ENCODE measurements at regions of chr9 and their contacts with region 1.

Region 1: DNA sequence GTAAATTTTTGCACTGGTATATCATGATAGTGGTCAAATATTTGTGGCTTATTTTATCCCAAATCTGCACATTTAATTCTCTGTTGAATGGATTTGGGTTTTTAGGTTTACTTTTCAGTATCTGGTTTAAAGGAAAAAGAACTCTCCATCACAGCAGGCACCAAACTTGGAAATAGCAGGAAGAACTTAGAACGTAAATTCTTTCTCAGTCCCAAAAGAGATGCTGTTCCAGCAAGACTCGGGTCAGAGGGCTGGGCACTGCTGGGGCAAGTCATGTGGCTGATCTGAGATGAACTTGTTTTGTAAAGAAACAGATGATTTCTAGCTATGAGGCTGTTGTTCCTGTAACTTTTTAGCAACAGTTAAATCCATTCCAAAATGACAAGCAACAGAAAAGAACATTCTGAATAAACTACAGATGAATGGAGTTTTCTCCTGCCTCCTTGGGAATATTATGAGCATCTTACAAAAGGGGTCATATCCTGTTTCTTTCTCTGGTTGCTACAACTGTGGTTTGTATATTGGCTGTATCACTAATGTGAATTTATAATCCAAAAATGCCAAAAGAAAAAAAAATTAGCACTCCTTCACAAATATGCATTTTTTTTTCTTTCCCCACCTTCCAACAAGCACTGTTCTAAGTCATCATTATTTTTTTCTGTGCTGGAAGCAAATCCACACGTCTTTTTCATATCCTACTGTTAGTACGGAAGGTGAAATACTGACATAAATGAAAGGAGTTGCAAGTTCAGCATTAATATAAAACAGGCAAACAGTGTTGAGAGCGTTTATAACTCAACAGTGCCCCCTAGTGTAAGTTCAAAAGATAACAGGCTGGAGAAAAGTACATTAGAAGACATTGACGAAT is 31.1 kb downstream of the OR2K2 start:
- DNase-seq: peak; percentile 8 to 62
- H3K4me3 ChIP-seq: no peak overlapping the region
- H3K27ac ChIP-seq: no peak overlapping the region
- H3K4me1 ChIP-seq: peaks cover 8% of the 10 kb centered on the region
- H3K27me3 ChIP-seq: no peaks in the 10 kb centered on the region
- CTCF ChIP-seq: peak; percentile 93

Region 2: GRCh38 chr9:110183208-110184145 is 1115.5 kb before region 1 on chr9:
- CTCF ChIA-PET with region 1: no interaction called
- POLR2A ChIA-PET with region 1: no interaction called
- intact Hi-C with region 1: loop called (anchors 5 kb)
- DNase-seq: peak; percentile 60 to 65
- H3K4me3 ChIP-seq: no peak overlapping the region
- H3K27ac ChIP-seq: no peak overlapping the region
- H3K4me1 ChIP-seq: peaks cover 26% of the 10 kb centered on the region
- H3K27me3 ChIP-seq: no peaks in the 10 kb centered on the region
- CTCF ChIP-seq: peak; percentile 87

Region 3: GRCh38 chr9:110638381-110638954 is 660.5 kb before region 1 on chr9:
- CTCF ChIA-PET with region 1: no interaction called
- POLR2A ChIA-PET with region 1: no interaction called
- intact Hi-C with region 1: loop called (anchors 1 kb)
- DNase-seq: peak in 1 of 2 experiments; percentile 52
- H3K4me3 ChIP-seq: no peak overlapping the region
- H3K27ac ChIP-seq: no peak overlapping the region
- H3K4me1 ChIP-seq: peaks cover 7% of the 10 kb centered on the region; the same call in 1 of the 2 replicates
- H3K27me3 ChIP-seq: no peaks in the 10 kb centered on the region
- CTCF ChIP-seq: peak; percentile 72

Region 4: DNA sequence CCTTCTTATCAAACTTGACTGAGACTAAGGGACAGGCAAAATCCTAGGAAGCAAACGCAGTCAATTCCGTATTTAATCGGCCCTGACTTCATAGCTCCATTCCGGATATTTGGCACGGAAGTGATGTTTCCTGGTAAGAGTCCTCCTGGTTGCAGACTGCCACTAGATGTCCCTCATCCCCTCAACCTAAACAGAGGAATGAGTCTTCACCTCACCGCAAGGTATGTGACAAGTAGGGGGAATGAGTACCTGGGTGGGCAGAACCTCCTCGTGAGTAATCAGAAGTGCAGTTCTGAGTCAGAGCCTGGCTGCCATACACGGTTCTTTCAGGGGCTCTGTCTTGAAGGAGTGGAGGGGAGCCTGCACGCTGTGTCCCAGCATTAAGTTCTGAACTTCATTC is 456.8 kb before region 1 on chr9:
- CTCF ChIA-PET with region 1: no interaction called
- POLR2A ChIA-PET with region 1: no interaction called
- intact Hi-C with region 1: loop called (anchors 1 kb)
- DNase-seq: peak in 1 of 2 experiments; percentile 18
- H3K4me3 ChIP-seq: no peak overlapping the region
- H3K27ac ChIP-seq: no peak overlapping the region
- H3K4me1 ChIP-seq: no peaks in the 10 kb centered on the region
- H3K27me3 ChIP-seq: no peaks in the 10 kb centered on the region
- CTCF ChIP-seq: no peak

Region 5: GRCh38 chr9:111037381-111038305 is 261.3 kb before region 1 on chr9:
- CTCF ChIA-PET with region 1: no interaction called
- POLR2A ChIA-PET with region 1: no interaction called
- intact Hi-C with region 1: loop called (anchors 2 kb)
- DNase-seq: peak in 1 of 2 experiments; percentile 57
- H3K4me3 ChIP-seq: peak overlapping the region; percentile 74
- H3K27ac ChIP-seq: peak overlapping the region; percentile 3; the same call in 1 of the 2 replicates
- H3K4me1 ChIP-seq: peaks cover 16% of the 10 kb centered on the region
- H3K27me3 ChIP-seq: no peaks in the 10 kb centered on the region
- CTCF ChIP-seq: no peak; the same call in 1 of the 2 replicates

Region 6: DNA sequence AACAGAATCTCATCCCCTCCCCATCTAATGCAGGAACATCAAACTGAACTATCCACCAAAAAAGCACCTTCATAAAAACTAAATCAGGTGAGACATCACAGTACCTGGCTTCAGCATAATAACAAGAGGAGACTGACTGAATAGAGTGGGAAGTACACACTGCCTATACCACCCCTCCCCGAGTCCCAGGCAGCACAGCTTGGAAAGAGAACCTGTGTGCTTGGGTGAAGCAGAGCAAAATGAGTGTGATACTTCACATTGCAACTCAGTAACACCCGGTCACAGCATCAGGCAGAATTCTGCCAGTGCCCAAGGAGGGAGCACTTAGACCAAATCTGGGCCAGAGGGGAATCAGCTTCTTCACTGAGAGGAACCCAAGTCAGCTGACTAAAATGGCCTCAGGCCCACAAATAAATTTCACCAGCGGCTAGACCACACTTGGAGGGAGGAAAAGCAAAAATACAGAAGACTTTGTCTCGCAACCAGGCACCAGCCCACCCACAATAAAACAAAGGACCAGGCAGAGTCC is 100.3 kb after region 1 on chr9:
- CTCF ChIA-PET with region 1: no interaction called
- POLR2A ChIA-PET with region 1: no interaction called
- intact Hi-C with region 1: no loop called
- DNase-seq: no peak
- H3K4me3 ChIP-seq: no peak overlapping the region
- H3K27ac ChIP-seq: no peak overlapping the region
- H3K4me1 ChIP-seq: no peaks in the 10 kb centered on the region
- H3K27me3 ChIP-seq: no peaks in the 10 kb centered on the region
- CTCF ChIP-seq: no peak

Region 7: DNA sequence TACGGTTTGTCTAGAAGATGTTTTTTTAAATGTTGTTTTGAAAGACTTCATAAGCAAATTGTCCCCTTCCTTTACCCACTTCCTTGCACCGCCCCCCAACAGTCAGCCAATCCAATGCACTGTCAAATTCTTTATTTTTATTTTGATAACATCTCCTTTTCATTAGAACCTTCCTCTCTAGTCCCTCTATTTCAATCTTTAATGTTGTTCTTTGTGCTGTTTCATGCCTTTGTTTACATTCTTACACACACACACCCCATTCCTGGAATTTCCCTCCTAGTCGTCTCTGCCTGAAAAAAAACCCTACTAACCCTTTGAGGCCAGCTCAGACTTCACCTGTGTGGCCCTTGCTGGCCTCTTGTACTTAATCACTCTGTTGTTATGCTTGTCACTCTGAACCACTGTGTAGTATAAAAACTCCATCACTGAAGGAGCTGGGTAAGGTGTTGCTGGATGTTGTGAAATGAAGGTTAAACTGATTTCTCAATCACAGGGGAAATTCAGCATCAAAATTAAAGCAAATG is 731.0 kb after region 1 on chr9:
- CTCF ChIA-PET with region 1: no interaction called
- POLR2A ChIA-PET with region 1: interaction called, 44 read pairs
- intact Hi-C with region 1: no loop called
- DNase-seq: peak; percentile 83 to 99
- H3K4me3 ChIP-seq: 0 out of 2 replicates have a peak overlapping the region, but pooled peaks have one; percentile 15
- H3K27ac ChIP-seq: peak overlapping the region; percentile 83
- H3K4me1 ChIP-seq: peaks cover 37% of the 10 kb centered on the region
- H3K27me3 ChIP-seq: no peaks in the 10 kb centered on the region
- CTCF ChIP-seq: no peak